CD4-positive, alpha-beta memory T cell (primary cell): ENCODE measurements at regions of chr17 and their contacts with region 1.

Region 1: DNA sequence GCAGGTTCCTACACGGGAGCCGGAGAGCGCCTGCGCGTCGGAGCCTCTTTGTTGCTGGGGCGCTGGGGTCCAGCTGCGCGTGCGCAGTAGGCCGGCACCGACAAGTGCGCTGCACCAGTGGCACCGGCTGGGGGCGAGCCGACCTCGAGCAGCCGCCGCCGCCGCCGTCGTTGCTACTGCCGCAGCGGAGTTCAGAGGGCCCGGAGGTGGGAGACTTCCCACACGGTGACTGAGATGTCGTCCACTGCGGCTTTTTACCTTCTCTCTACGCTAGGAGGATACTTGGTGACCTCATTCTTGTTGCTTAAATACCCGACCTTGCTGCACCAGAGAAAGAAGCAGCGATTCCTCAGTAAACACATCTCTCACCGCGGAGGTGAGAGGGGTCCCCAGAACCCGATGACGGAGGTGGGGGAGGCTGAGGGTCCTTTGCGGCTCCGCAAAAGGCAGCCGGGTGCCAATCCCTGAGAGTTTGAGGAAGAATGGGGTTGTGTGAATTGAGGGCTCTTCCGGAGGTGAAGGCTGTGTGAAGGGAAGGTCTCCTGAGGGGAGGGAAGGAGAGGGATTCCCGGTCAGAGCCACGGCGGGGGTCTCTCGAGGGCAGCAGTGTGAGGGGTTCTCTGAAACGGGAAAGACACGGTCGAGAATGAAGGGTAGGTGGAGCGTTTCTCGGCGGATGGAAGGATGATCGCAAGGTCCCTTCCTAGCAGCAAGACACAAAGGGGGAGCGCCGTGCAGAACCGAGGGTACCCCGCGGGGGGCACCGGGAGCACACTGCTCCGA is at the start of gene GDPD1:
- DNase-seq: peak; percentile 95 to 98 (median 96)
- H3K4me3 ChIP-seq: peak within 1 kb of the TSS; percentile 97 to 98
- H3K4me3 Mint-ChIP-seq: peak within 1 kb of the TSS; percentile 96 to 100 (median 98)
- H3K27ac ChIP-seq: peak within 1 kb of the TSS; percentile 92
- H3K27ac Mint-ChIP-seq: peak within 1 kb of the TSS; percentile 96 to 100 (median 99)
- H3K4me1 ChIP-seq: peaks cover 7% of the 10 kb centered on the region
- H3K4me1 Mint-ChIP-seq: peaks cover 7 to 15% (median 12%) of the 10 kb centered on the region in 4 donors
- H3K27me3 ChIP-seq: no peaks in the 10 kb centered on the region
- H3K27me3 Mint-ChIP-seq: no peaks in the 10 kb centered on the region
- total RNA-seq, gene GDPD1: 4.5 to 5.3 TPM

Region 2: DNA sequence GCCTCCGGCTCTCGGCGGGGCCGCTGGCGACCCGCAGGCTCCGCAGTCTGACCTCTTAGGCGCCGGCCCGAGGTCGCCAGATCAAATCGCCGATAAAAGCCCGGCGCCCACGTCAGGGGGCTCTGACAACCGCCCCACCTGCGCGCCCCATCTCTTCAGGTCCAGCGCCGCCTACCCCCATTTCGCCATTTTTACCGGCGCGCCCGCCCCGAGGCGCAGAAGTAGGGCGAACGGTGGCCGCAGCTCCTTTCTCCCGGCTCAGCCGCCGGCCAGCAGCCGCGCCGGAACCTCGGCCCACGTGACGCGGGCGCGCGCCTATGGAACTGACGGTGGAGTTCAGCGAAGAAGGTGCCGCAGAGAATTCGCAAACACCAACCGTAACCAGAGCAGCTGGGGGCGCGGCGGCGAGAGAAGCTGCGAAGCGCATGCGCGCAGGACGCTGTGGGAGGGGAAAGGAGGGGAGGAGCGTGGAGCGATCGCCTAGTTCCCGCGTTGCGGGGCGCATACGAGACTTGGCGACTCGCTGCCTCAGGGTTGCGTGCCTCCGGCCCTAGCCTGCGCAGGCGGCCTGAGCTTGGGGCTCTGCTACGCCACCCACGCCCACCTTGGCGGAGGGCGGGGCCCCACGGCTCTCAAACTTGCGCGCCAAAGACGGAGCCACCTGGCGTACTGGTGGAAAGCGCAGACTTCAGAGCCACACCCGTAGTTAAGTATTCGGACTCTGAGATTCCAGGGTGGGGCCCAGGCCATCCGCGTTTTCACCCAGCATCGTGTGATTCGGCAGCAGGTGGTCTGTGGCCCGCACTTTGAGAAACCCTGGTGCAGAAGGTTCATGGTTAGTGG is 113.9 kb before region 1 on chr17 and contains the start of gene TRIM37:
- CTCF ChIA-PET with region 1: no interaction called
- POLR2A ChIA-PET with region 1: interaction called, 4 read pairs
- intact Hi-C with region 1: loop called (anchors 5 kb)
- DNase-seq: peak; percentile 99 to 100 (median 99)
- H3K4me3 ChIP-seq: peak within 1 kb of the TSS; percentile 67 to 71
- H3K4me3 Mint-ChIP-seq: peak within 1 kb of the TSS; percentile 90 to 96 (median 92)
- H3K27ac ChIP-seq: peak within 1 kb of the TSS; percentile 81
- H3K27ac Mint-ChIP-seq: peak within 1 kb of the TSS; percentile 90 to 97 (median 95)
- H3K4me1 ChIP-seq: peaks cover 29% of the 10 kb centered on the region
- H3K4me1 Mint-ChIP-seq: peaks cover 25 to 47% (median 37%) of the 10 kb centered on the region in 4 donors
- H3K27me3 ChIP-seq: no peaks in the 10 kb centered on the region
- H3K27me3 Mint-ChIP-seq: no peaks in the 10 kb centered on the region
- total RNA-seq, gene TRIM37: 20.7 to 25.0 TPM

Region 3: DNA sequence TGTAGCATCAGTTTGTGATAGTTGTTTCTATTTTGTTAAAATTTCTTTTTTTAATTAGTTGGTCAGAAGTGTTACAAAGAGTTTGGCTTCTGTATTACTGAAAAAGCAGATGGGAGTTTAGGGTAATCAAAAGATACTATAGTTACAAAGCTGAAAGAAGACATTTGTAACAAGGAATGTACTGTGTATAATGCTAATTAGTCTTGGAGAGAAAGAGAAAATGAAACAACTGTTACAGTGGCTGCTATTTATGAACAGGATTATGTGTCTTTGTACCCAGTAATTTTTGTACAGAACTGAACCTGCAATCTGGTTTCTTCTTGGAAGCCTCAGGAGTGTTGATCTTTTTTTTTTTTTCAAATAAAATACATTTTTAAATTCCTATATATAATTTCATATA is 14.1 kb after region 1 on chr17:
- CTCF ChIA-PET with region 1: no interaction called
- POLR2A ChIA-PET with region 1: no interaction called
- intact Hi-C with region 1: no loop called
- DNase-seq: no peak
- H3K4me3 ChIP-seq: no peak overlapping the region
- H3K4me3 Mint-ChIP-seq: no peak overlapping the region
- H3K27ac ChIP-seq: no peak overlapping the region
- H3K27ac Mint-ChIP-seq: no peak overlapping the region
- H3K4me1 ChIP-seq: no peaks in the 10 kb centered on the region
- H3K4me1 Mint-ChIP-seq: peaks cover 0 to 2% (median 0%) of the 10 kb centered on the region in 4 donors
- H3K27me3 ChIP-seq: no peaks in the 10 kb centered on the region
- H3K27me3 Mint-ChIP-seq: no peaks in the 10 kb centered on the region

Region 4: DNA sequence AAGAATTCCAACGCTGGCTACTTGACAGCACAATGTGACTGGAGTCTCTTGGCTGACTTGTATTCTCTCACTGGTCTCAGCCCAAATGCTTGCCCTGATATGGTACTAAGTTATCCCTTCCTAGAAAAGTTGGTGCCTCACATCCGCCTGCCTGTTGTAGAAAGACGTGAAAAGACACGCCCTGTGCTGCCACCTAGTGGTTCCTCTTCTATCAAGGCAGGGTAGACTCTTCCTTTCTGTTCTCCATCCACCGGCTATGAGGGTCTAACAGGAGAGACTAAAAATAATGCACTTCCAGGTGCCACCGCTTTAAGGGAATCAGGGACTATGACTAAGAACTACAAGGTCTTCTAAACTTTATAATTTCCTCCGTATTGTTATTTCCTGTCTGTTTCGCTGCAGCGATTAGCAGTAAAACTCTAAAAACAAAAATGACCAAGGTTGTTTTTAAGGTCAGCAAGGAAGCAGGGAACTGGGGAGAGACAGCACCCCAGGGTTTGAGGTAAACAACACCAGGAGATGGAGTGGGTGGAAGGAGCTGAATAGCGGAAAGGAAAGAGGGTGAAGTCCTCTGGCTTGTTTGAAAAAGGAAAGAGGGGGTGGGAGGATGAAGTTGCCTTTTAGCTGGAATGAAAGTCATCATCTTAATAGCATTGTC is 220.3 kb after region 1 on chr17:
- CTCF ChIA-PET with region 1: interaction called, 3 read pairs
- POLR2A ChIA-PET with region 1: no interaction called
- intact Hi-C with region 1: loop called (anchors 1 kb)
- DNase-seq: peak; percentile 78 to 83 (median 79)
- H3K4me3 ChIP-seq: no peak overlapping the region
- H3K4me3 Mint-ChIP-seq: peak overlapping the region; percentile 3 to 70 (median 19)
- H3K27ac ChIP-seq: no peak overlapping the region
- H3K27ac Mint-ChIP-seq: peak overlapping the region in 2 of 7 donors; percentile 25 to 46
- H3K4me1 ChIP-seq: peaks cover 20% of the 10 kb centered on the region
- H3K4me1 Mint-ChIP-seq: peaks cover 8 to 23% (median 17%) of the 10 kb centered on the region in 4 donors
- H3K27me3 ChIP-seq: no peaks in the 10 kb centered on the region
- H3K27me3 Mint-ChIP-seq: peaks cover 2 to 4% of the 10 kb centered on the region in 2 donors